Activated B cell treated with CpG ODN at 0.5 μM for 24 hours (primary cell): ENCODE measurements at regions of chr3 and their contacts with region 1.

Region 1: GRCh38 chr3:136752422-136753325 is 496 bp upstream of the STAG1 start:
- DNase-seq: peak; percentile 99
- ATAC-seq: peak; percentile 85
- H3K4me3 Mint-ChIP-seq: peak overlapping the region; percentile 93
- H3K27ac Mint-ChIP-seq: peak overlapping the region; percentile 92
- H3K4me1 Mint-ChIP-seq: peaks cover 42% of the 10 kb centered on the region
- H3K27me3 Mint-ChIP-seq: no peaks in the 10 kb centered on the region
- CTCF ChIP-seq: peak; percentile 66

Region 2: DNA sequence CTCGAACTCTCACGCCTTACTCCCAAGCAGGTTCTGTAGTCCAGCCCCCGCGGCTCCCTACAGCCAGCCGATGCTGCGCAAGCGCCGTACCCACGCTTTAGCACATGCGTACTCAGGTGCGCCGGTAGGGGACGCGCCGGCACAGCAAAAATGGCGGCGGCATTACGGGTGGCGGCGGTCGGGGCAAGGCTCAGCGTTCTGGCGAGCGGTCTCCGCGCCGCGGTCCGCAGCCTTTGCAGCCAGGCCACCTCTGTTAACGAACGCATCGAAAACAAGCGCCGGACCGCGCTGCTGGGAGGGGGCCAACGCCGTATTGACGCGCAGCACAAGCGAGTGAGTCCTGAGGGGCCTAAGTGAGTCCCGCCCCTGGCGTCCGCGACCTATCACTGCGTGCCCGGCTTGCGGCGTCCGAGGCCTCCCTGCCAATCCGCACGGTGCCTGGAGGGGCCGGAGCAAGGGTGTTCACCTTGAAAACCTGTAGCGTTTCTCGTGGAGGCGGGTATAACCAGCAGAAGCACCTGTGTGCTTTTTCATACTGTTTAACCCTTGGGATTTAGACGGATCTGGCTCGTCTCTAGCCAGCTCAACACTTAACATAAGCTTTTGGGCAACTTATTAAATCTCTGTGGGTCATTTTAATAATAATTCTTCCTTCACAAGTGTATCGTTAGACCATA is 502.3 kb before region 1 on chr3 and contains the start of gene PCCB:
- CTCF ChIA-PET with region 1: interaction called, 4 read pairs
- POLR2A ChIA-PET with region 1: interaction called, 18 read pairs
- intact Hi-C with region 1: loop called (anchors 1 kb)
- DNase-seq: peak; percentile 88
- ATAC-seq: peak; percentile 96
- H3K4me3 Mint-ChIP-seq: peak within 1 kb of the TSS; percentile 92
- H3K27ac Mint-ChIP-seq: peak within 1 kb of the TSS; percentile 95
- H3K4me1 Mint-ChIP-seq: peaks cover 23% of the 10 kb centered on the region
- H3K27me3 Mint-ChIP-seq: no peaks in the 10 kb centered on the region
- CTCF ChIP-seq: no peak
- total RNA-seq, gene PCCB: 31.2 and 31.8 TPM in 2 replicates

Region 3: GRCh38 chr3:136396916-136397315 is 355.8 kb before region 1 on chr3:
- CTCF ChIA-PET with region 1: interaction called, 53 read pairs
- POLR2A ChIA-PET with region 1: interaction called, 23 read pairs
- intact Hi-C with region 1: no loop called
- DNase-seq: no peak
- ATAC-seq: no peak
- H3K4me3 Mint-ChIP-seq: no peak overlapping the region
- H3K27ac Mint-ChIP-seq: no peak overlapping the region
- H3K4me1 Mint-ChIP-seq: no peaks in the 10 kb centered on the region
- H3K27me3 Mint-ChIP-seq: no peaks in the 10 kb centered on the region
- CTCF ChIP-seq: no peak

Region 4: GRCh38 chr3:136741063-136741462 is 11.6 kb before region 1 on chr3:
- CTCF ChIA-PET with region 1: interaction called, 14 read pairs
- POLR2A ChIA-PET with region 1: interaction called, 9 read pairs
- intact Hi-C with region 1: no loop called
- DNase-seq: no peak
- ATAC-seq: no peak
- H3K4me3 Mint-ChIP-seq: no peak overlapping the region
- H3K27ac Mint-ChIP-seq: no peak overlapping the region
- H3K4me1 Mint-ChIP-seq: peaks cover 25% of the 10 kb centered on the region
- H3K27me3 Mint-ChIP-seq: no peaks in the 10 kb centered on the region
- CTCF ChIP-seq: no peak

Region 5: DNA sequence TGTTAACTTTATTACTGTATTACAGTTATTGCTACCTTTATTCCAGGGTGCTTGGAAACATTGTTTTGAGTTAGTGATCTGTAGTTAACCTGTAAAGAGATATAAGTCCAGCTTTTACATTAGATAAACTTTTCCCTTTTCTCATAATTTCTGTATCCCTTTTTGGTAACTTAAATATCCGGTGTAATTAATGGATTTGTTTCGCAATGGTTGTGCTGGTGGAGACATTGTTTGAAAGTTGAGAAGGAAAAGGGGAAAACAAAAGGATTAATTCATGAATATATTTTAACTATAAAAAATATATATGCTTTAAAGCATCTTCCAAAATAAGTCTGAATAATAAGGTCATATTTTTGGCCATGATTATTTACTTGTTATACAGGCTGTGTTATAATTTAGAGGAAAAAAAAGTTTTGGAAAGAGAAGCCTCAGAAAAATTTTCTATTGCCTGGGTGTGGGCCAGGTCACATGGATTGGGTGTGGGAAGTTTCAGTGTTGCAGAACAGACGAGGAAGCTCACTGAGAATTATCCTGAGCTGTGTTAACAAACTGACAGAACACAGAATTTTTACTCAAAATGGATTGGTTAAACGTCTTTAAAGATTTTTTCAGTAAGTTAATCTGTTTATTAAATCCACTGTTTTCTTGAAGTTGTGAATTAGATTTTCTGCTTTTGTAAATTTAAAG is 177.5 kb after region 1 on chr3:
- CTCF ChIA-PET with region 1: no interaction called
- POLR2A ChIA-PET with region 1: interaction called, 6 read pairs
- intact Hi-C with region 1: loop called (anchors 5 kb)
- DNase-seq: no peak
- ATAC-seq: no peak
- H3K4me3 Mint-ChIP-seq: no peak overlapping the region
- H3K27ac Mint-ChIP-seq: no peak overlapping the region
- H3K4me1 Mint-ChIP-seq: peaks cover 55% of the 10 kb centered on the region
- H3K27me3 Mint-ChIP-seq: no peaks in the 10 kb centered on the region
- CTCF ChIP-seq: no peak

Region 6: GRCh38 chr3:137554242-137554641 is 801.6 kb after region 1 on chr3:
- CTCF ChIA-PET with region 1: no interaction called
- POLR2A ChIA-PET with region 1: no interaction called
- intact Hi-C with region 1: no loop called
- DNase-seq: no peak
- ATAC-seq: no peak
- H3K4me3 Mint-ChIP-seq: no peak overlapping the region
- H3K27ac Mint-ChIP-seq: no peak overlapping the region
- H3K4me1 Mint-ChIP-seq: no peaks in the 10 kb centered on the region
- H3K27me3 Mint-ChIP-seq: no peaks in the 10 kb centered on the region
- CTCF ChIP-seq: no peak